Cardiac septum (tissue), 1 donor: ENCODE measurements at regions of chr3 and their contacts with region 1.

Region 1: DNA sequence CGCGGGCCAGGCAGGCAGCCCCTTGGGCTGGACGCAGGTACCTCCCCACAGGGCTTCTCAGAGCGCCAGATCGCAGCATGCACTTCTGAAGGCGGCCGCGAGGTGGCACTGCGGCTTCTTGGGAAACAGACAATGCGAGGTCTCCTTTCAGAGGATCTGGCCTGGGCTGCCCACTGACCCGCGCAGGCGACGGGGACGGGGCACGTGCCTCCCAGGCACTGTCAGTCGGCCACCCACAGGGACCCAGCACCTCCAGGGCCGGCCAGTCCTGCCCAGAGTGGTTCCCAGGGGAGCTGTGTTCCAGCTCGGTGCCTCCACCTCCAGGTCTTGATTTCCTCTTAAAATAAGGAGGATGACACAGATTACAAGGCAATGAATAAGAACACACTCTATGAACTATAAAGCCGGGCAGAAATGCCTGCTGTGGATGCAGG is 24.4 kb upstream of the TXNRD3 start:
- DNase-seq: peak; percentile 90

Region 2: DNA sequence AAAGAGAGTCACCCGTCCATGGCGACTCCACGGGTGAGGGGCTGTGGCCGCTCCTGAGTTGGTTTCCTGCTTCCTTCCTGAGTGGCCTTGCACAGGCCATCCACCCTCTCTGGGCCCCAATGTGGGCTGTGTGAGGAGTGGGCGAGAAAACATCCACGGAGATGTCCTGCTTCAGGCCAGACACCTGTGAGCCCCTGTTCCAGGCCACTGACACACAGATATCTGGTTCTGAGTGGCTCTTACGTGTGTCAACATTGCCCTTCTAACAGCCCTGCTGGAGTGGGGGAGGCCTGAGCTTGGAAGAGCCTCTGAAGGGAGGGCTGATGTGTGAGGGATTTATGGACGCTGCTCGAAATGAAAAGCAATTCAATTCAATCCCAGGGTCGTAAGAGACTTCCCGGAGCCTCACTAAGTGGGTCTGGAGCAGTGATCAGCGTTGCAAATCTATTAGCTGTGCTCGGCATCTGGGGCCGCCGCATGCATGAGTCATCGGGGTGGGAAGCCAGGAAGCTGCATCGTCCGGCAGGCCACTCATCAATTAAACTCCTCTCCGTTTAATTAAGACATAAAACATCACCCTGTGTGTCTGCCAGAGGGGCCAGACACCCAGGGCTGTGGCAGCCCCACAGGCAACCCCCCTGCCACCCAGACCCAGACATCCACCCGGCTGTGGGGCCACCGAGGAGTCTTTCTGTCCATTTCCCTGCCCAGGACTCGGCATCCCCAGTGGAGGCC is 493.6 kb after region 1 on chr3:
- intact Hi-C with region 1: loop called (anchors 2 kb)
- DNase-seq: peak; percentile 59

Region 3: GRCh38 chr3:127455541-127456450 is 776.5 kb after region 1 on chr3:
- intact Hi-C with region 1: loop called (anchors 2 kb)
- DNase-seq: peak; percentile 81

Region 4: GRCh38 chr3:127544192-127544802 is 865.0 kb after region 1 on chr3:
- intact Hi-C with region 1: loop called (anchors 5 kb)
- DNase-seq: peak; percentile 82